Astrocyte of the cerebellum (primary cell): ENCODE measurements at regions of chr2 and their contacts with region 1.

Region 1: GRCh38 chr2:197113275-197113711 is 186.8 kb upstream of the PGAP1 start:
- DNase-seq: no peak
- H3K4me3 ChIP-seq: no peak overlapping the region
- CTCF ChIP-seq: peak; percentile 49

Region 2: GRCh38 chr2:197073701-197074433 is 39.4 kb before region 1 on chr2:
- in situ Hi-C with region 1: loop called (anchors 5 kb)
- DNase-seq: peak; percentile 61
- H3K4me3 ChIP-seq: no peak overlapping the region
- CTCF ChIP-seq: no peak